CD4-positive, alpha-beta memory T cell (primary cell): ENCODE measurements at regions of chr11 and their contacts with region 1.

Region 1: GRCh38 chr11:46121724-46122477 is 647 bp upstream of the PHF21A start:
- DNase-seq: peak; percentile 82 to 86 (median 84)
- H3K4me3 ChIP-seq: peak overlapping the region; percentile 42 to 60
- H3K4me3 Mint-ChIP-seq: peak overlapping the region; percentile 86 to 94 (median 92)
- H3K27ac ChIP-seq: peak overlapping the region; percentile 60
- H3K27ac Mint-ChIP-seq: peak overlapping the region; percentile 87 to 98 (median 94)
- H3K4me1 ChIP-seq: peaks cover 35% of the 10 kb centered on the region
- H3K4me1 Mint-ChIP-seq: peaks cover 27 to 51% (median 34%) of the 10 kb centered on the region in 4 donors
- H3K27me3 ChIP-seq: no peaks in the 10 kb centered on the region
- H3K27me3 Mint-ChIP-seq: peaks cover 0 to 3% of the 10 kb centered on the region in 2 donors

Region 2: GRCh38 chr11:46100670-46101069 is 21.2 kb before region 1 on chr11:
- CTCF ChIA-PET with region 1: interaction called, 8 read pairs
- POLR2A ChIA-PET with region 1: interaction called, 4 read pairs
- intact Hi-C with region 1: loop called (anchors 2 kb)
- DNase-seq: no peak
- H3K4me3 ChIP-seq: no peak overlapping the region
- H3K4me3 Mint-ChIP-seq: peak overlapping the region; percentile 1 to 91 (median 66)
- H3K27ac ChIP-seq: peak overlapping the region; percentile 11
- H3K27ac Mint-ChIP-seq: peak overlapping the region in 6 of 7 donors; percentile 6 to 78 (median 64)
- H3K4me1 ChIP-seq: peaks cover 34% of the 10 kb centered on the region
- H3K4me1 Mint-ChIP-seq: peaks cover 48 to 80% (median 62%) of the 10 kb centered on the region in 4 donors
- H3K27me3 ChIP-seq: no peaks in the 10 kb centered on the region
- H3K27me3 Mint-ChIP-seq: no peaks in the 10 kb centered on the region

Region 3: DNA sequence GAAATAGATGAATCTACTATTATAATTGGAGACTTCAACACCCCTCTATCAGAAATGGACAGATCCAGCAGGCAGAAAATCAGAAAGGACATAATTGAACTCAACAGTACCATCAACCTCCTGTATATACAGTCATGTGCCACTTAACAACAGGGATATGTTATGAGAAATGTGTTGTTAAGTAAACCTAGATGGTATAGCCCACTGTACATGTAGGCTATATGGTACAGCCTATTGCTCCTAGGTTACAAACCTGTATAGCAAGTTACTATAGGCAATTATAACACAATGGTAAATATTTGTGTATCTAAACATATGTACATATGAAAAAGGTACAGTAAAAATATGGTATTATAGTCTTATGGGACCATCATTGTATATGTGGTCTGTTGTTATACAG is 66.1 kb after region 1 on chr11:
- CTCF ChIA-PET with region 1: no interaction called
- POLR2A ChIA-PET with region 1: no interaction called
- intact Hi-C with region 1: no loop called
- DNase-seq: no peak
- H3K4me3 ChIP-seq: no peak overlapping the region
- H3K4me3 Mint-ChIP-seq: no peak overlapping the region
- H3K27ac ChIP-seq: no peak overlapping the region
- H3K27ac Mint-ChIP-seq: no peak overlapping the region
- H3K4me1 ChIP-seq: no peaks in the 10 kb centered on the region
- H3K4me1 Mint-ChIP-seq: no peaks in the 10 kb centered on the region
- H3K27me3 ChIP-seq: no peaks in the 10 kb centered on the region
- H3K27me3 Mint-ChIP-seq: peaks cover 18 to 19% of the 10 kb centered on the region in 2 donors